HEK293 (cell line): ENCODE measurements at regions of chr1 and their contacts with region 1.

Region 1: DNA sequence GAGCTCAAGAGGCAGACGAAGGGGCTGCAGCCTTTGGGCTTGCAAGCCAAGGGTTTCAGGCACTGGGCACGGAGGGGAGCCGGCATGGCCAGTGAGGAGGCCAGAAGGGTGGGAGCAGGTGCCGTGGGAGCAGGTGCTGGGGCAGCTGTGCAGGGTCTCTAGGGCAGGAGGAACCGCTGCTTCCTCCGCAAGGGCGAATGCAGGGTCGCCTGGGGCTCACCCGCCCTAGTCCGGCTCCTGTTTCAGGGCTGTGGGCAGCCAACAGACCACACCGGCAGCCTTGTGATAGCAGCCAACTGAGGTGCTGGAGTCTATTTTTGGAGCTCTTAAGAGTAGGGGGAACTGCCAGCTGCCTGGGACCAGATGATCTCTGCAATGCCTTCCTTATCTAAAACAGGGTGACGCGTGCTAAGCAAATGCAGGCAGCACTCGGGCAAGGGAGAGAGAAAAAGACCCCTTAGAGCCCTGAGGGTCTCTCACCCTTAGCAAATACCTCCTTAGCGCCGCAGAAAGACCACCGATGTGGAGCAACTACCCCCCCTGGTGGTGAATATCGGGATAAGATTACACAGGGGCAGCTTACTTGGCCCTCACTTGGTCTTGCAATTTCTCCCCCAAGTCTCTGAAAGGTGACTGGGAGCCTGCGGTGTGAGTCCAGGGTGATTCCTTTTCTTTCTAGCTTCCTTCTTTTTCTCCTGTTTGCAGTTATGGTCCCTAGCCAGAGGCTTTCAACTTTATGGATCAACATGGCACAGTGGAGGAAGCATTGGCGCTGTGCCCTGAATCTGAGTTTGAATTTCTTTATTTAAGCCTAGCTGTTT is 20.7 kb upstream of the MAPKAPK2 start:
- H3K4me3 ChIP-seq: no peak overlapping the region; the same call in 1 of the 2 replicates
- H3K27ac ChIP-seq: no peak overlapping the region
- H3K4me1 ChIP-seq: no peaks in the 10 kb centered on the region
- CTCF ChIP-seq: peak; percentile 74

Region 2: GRCh38 chr1:206479183-206480125 is 184.6 kb before region 1 on chr1:
- CTCF ChIA-PET with region 1: interaction called, 22 read pairs
- POLR2A ChIA-PET with region 1: no interaction called
- H3K4me3 ChIP-seq: no peak overlapping the region
- H3K27ac ChIP-seq: no peak overlapping the region
- H3K4me1 ChIP-seq: no peaks in the 10 kb centered on the region
- CTCF ChIP-seq: peak; percentile 87

Region 3: DNA sequence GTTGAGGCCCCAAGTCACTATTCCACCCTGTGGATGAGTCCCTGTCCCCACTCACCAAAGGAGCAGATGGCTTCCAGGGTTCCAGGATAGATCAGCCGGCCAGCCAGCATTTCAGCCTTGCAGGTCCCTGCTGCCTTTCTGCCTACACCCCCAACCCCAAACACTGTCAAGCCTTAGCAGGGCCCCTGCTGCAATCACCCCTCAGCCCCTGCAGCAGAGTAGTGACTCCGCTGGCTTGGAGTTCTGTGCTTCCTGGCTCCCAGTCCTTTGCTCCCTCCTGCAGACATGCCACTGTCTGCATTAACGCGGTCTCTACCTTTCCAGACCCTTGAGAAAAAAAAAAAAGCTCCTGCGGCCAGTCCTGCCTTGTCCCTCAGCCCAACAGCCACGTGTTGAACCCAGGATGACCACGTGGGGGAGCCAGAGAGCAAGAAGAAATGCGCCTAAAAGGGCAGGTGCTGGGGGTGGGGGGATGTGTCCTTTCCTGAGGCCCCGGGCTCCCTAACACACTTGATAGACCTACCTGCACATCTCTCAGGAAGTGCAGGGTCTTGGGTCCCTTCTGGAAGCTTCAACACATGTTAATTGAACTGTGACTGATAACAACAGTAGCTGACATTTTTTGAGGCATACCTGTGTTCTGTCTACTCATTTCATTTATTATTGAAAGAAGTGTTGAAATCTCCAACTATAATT is 119.3 kb before region 1 on chr1:
- CTCF ChIA-PET with region 1: interaction called, 29 read pairs
- POLR2A ChIA-PET with region 1: no interaction called
- H3K4me3 ChIP-seq: no peak overlapping the region
- H3K27ac ChIP-seq: no peak overlapping the region
- H3K4me1 ChIP-seq: no peaks in the 10 kb centered on the region
- CTCF ChIP-seq: peak; percentile 52; the same call in 1 of the 2 replicates

Region 4: DNA sequence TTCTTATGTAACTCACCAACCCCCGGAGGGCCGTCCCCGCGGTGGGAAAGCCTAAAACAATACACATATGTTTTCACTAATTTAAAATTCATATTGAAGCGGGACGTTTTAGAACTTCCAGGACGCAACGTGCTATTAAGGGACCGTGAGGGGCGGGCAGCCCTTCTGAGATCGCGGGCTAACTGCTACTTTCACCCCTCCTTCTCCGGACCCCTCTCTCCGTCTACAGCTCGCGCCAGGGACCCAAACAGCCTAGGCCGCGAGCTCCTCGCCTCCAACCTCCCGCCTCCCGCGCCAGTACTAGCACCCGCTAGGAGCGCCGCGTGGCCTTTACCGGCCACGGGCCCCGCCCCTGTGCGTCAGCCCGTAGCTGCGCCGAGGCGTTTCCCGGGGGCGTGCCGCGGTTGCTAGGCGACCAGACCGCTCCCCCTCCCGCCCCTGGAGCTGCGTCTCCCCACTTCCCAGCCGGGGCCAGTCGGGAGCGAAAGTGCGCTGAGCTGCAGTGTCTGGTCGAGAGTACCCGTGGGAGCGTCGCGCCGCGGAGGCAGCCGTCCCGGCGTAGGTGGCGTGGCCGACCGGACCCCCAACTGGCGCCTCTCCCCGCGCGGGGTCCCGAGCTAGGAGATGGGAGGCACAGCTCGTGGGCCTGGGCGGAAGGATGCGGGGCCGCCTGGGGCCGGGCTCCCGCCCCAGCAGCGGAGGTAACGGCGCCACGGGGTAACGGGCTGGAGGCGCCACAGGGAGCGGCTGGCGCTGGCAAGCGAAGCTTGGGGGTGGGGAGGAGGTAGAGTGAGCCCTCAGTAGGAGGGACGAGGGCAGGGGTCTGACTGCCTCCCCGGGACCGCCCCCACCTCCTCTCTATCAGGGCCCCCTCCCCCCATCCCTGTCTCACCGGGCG is 28.7 kb before region 1 on chr1 and contains the start of gene DYRK3:
- CTCF ChIA-PET with region 1: interaction called, 380 read pairs
- POLR2A ChIA-PET with region 1: interaction called, 7 read pairs
- H3K4me3 ChIP-seq: peak within 1 kb of the TSS; percentile 88
- H3K27ac ChIP-seq: peak within 1 kb of the TSS; percentile 56; the same call in 1 of the 2 replicates
- H3K4me1 ChIP-seq: peaks cover 11% of the 10 kb centered on the region
- CTCF ChIP-seq: peak; percentile 70

Region 5: DNA sequence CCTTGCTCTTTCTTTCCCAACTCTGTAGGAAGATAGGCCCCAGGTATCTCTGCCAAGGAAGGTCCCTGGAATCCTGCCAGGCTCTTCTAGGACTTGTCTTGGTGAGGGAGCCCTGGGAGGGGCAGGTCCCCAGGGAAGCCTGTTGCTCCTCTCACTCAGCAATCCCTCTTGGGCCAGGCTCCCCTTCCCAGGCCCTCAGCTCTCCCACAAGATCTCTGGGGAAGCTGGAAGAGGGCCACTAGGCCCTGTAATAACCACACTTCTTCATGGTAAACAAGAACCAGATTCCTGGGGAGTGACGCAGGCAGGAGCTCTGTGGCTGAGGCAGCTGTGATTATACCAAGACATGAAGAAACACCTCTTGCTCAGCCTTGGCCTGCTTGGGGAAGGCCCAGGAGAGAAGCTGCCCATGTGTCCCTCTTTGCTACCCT is 10.7 kb after region 1 on chr1:
- CTCF ChIA-PET with region 1: interaction called, 70 read pairs
- POLR2A ChIA-PET with region 1: no interaction called
- H3K4me3 ChIP-seq: no peak overlapping the region
- H3K27ac ChIP-seq: no peak overlapping the region
- H3K4me1 ChIP-seq: no peaks in the 10 kb centered on the region
- CTCF ChIP-seq: no peak

Region 6: DNA sequence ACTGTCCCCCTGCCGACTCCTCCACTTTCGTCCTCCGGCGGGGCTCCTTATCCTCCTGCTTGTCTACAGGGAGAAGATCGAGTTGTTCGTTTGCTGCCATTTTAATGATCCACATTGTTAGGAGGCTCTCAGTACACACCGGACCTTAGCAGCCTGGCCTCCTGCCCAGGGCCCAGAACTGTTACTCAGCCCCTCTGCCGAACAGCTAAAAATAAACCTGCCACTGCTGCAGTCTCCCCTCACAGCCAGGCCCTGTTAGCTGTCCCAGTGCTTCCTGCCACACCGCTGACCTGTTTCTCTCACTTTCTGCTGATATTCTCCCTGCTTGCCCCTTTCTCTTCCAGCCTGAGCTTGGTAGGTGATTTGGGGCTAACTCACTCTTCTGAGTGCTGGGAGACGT is 29.0 kb after region 1 on chr1:
- CTCF ChIA-PET with region 1: interaction called, 24 read pairs
- POLR2A ChIA-PET with region 1: no interaction called
- H3K4me3 ChIP-seq: no peak overlapping the region
- H3K27ac ChIP-seq: no peak overlapping the region
- H3K4me1 ChIP-seq: no peaks in the 10 kb centered on the region; the same call in 1 of the 2 replicates
- CTCF ChIP-seq: no peak